ENCODE measurements at regions of chr1 and their contacts with region 1.

Region 1: GRCh38 chr1:59759156-59759925 is 55.4 kb upstream of the HOOK1 start:
- DNase-seq: peak; percentile 73
- H3K4me3 ChIP-seq: no peak overlapping the region
- H3K27ac ChIP-seq: no peak overlapping the region
- H3K4me1 ChIP-seq: peaks cover 22% of the 10 kb centered on the region
- H3K27me3 ChIP-seq: no peaks in the 10 kb centered on the region
- CTCF ChIP-seq: peak; percentile 96

Region 2: GRCh38 chr1:58652651-58653184 is 1106.6 kb before region 1 on chr1:
- CTCF ChIA-PET with region 1: no interaction called
- dilution Hi-C with region 1: no loop called
- in situ Hi-C with region 1: no loop called
- intact Hi-C with region 1: loop called (anchors 5 kb)
- DNase-seq: peak; percentile 75
- H3K4me3 ChIP-seq: no peak overlapping the region
- H3K27ac ChIP-seq: no peak overlapping the region
- H3K4me1 ChIP-seq: peaks cover 3% of the 10 kb centered on the region
- H3K27me3 ChIP-seq: no peaks in the 10 kb centered on the region
- CTCF ChIP-seq: peak; percentile 76 to 81

Region 3: DNA sequence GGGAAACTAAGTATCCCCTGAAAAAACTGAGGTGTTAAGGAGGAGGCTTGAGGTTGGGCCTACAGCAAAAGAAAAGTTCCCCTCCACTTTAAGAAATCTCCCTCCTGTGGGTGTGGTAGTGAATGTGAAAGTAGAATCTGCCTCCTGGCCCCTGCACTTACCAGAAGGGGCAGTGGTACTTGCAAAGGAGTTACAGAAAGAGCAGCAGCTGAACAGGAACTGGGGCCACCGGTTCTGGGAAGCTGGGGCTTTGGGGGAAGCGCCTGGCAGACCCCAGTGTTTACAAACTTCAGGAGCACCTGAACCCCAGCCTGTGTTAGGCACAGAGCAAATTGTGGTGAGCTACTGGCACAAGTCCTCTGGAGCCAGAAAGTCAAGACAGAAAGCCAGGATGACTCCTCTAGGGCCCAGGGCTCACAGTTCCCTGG is 712.6 kb before region 1 on chr1:
- CTCF ChIA-PET with region 1: no interaction called
- dilution Hi-C with region 1: no loop called
- in situ Hi-C with region 1: no loop called
- intact Hi-C with region 1: loop called (anchors 10 kb)
- DNase-seq: no peak
- H3K4me3 ChIP-seq: no peak overlapping the region
- H3K27ac ChIP-seq: no peak overlapping the region
- H3K4me1 ChIP-seq: peaks cover 12% of the 10 kb centered on the region
- H3K27me3 ChIP-seq: no peaks in the 10 kb centered on the region
- CTCF ChIP-seq: no peak

Region 4: GRCh38 chr1:59296358-59297256 is 462.7 kb before region 1 on chr1 and contains the start of gene FGGY:
- CTCF ChIA-PET with region 1: no interaction called
- dilution Hi-C with region 1: no loop called
- in situ Hi-C with region 1: no loop called
- intact Hi-C with region 1: loop called (anchors 10 kb)
- DNase-seq: peak; percentile 98
- H3K4me3 ChIP-seq: peak within 1 kb of the TSS; percentile 28 to 62 (median 58)
- H3K27ac ChIP-seq: peak within 1 kb of the TSS; percentile 82
- H3K4me1 ChIP-seq: peaks cover 14% of the 10 kb centered on the region
- H3K27me3 ChIP-seq: no peaks in the 10 kb centered on the region
- CTCF ChIP-seq: no peak
- total RNA-seq, gene FGGY: 10.3 to 14.7 TPM

Region 5: GRCh38 chr1:59645893-59646292 is 113.4 kb before region 1 on chr1:
- CTCF ChIA-PET with region 1: no interaction called
- dilution Hi-C with region 1: no loop called
- in situ Hi-C with region 1: no loop called
- intact Hi-C with region 1: no loop called
- DNase-seq: no peak
- H3K4me3 ChIP-seq: no peak overlapping the region
- H3K27ac ChIP-seq: no peak overlapping the region
- H3K4me1 ChIP-seq: no peaks in the 10 kb centered on the region
- H3K27me3 ChIP-seq: no peaks in the 10 kb centered on the region
- CTCF ChIP-seq: no peak

Region 6: GRCh38 chr1:59707178-59707791 is 52.1 kb before region 1 on chr1:
- CTCF ChIA-PET with region 1: interaction called, 5 read pairs
- dilution Hi-C with region 1: no loop called
- in situ Hi-C with region 1: no loop called
- intact Hi-C with region 1: loop called (anchors 2 kb)
- DNase-seq: peak; percentile 79
- H3K4me3 ChIP-seq: no peak overlapping the region
- H3K27ac ChIP-seq: no peak overlapping the region
- H3K4me1 ChIP-seq: peaks cover 21% of the 10 kb centered on the region
- H3K27me3 ChIP-seq: no peaks in the 10 kb centered on the region
- CTCF ChIP-seq: no peak